ENCODE measurements at regions of chr10 and their contacts with region 1.

Region 1: DNA sequence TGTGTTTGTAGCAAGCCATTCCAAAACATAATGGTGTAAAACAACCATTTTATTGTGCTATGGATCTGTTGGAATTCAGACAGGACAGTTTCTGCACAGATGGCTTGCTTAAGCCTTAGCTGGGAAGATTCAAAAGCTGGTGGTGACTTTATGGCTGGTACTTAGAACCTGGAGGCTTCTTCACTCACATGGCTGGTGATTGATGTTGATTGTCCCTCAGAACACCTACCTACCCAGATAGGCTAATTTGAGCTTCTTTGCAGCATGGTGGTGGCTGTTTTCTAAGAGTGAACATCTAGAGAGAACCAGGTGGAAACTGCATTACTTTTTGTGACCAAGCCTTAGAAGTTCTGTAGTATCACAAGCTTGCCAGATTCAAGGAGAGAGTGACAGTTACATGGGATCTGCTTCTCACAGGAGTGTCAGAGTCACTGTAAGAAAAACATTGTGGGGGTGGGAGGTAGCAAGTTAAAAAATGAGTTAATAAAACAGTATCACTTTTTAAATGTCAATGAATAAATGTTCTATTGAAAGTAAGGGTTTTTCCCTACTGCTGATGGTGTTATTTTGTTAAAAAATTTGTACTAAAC is 7.1 kb downstream of the R3HCC1L start:
- DNase-seq: no peak
- H3K4me3 Mint-ChIP-seq: no peak overlapping the region
- H3K27ac Mint-ChIP-seq: peak overlapping the region; percentile 6
- H3K4me1 Mint-ChIP-seq: peaks cover 67% of the 10 kb centered on the region
- H3K27me3 Mint-ChIP-seq: no peaks in the 10 kb centered on the region

Region 2: GRCh38 chr10:98208925-98209324 is 67.3 kb after region 1 on chr10:
- CTCF ChIA-PET with region 1: no interaction called
- POLR2A ChIA-PET with region 1: no interaction called
- intact Hi-C with region 1: loop called (anchors 5 kb)
- DNase-seq: no peak
- H3K4me3 Mint-ChIP-seq: no peak overlapping the region
- H3K27ac Mint-ChIP-seq: no peak overlapping the region
- H3K4me1 Mint-ChIP-seq: peaks cover 41% of the 10 kb centered on the region
- H3K27me3 Mint-ChIP-seq: no peaks in the 10 kb centered on the region